Adrenal gland (tissue), 19 donors: ENCODE measurements at regions of chr2 and their contacts with region 1.

Region 1: DNA sequence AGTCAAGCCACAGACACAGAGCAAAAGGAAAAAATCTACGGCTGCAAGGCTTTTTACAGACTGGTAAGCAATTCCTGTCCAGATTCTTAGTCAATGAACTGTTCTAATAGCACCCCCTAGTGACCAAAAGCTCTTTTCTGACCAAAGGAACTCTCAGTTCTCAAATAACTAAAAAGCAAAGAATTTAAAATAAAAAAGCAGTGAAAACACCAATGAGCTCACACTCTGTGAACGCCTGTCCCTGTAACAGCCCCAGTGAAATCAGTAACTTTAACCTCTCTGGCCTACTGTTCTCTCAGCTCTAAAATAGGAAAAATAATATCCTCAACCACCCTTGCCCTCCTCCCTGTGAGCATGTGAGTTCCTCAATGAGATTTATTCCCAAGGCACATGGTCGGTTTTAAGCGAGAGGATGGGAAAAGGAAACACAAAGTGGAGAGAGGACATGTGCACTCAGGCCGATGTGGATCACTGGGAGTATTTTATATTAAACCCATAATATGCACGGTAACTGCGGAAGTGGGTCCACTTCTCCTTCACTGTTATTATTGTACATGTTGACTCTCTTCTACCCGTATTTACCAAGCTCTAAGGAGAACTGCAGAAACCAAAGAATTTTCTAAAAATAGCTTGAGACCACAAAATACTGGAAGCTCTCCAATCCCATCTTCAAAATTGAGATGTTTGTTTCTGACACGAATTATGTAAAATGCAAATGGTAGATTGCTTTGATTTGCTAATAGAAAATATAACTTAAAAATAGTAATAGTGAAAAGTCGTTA is 128.5 kb downstream of the STK39 start:
- DNase-seq: peak in 4 of 7 donors; percentile 11 to 32 (median 18)
- H3K4me3 ChIP-seq: no peak overlapping the region
- H3K27ac ChIP-seq: peak overlapping the region in 1 of 5 donors; percentile 19
- H3K4me1 ChIP-seq: no peaks in the 10 kb centered on the region
- H3K27me3 ChIP-seq: no peaks in the 10 kb centered on the region
- CTCF ChIP-seq: peak; percentile 55 to 73 (median 62)
- POLR2A ChIP-seq: no peak

Region 2: DNA sequence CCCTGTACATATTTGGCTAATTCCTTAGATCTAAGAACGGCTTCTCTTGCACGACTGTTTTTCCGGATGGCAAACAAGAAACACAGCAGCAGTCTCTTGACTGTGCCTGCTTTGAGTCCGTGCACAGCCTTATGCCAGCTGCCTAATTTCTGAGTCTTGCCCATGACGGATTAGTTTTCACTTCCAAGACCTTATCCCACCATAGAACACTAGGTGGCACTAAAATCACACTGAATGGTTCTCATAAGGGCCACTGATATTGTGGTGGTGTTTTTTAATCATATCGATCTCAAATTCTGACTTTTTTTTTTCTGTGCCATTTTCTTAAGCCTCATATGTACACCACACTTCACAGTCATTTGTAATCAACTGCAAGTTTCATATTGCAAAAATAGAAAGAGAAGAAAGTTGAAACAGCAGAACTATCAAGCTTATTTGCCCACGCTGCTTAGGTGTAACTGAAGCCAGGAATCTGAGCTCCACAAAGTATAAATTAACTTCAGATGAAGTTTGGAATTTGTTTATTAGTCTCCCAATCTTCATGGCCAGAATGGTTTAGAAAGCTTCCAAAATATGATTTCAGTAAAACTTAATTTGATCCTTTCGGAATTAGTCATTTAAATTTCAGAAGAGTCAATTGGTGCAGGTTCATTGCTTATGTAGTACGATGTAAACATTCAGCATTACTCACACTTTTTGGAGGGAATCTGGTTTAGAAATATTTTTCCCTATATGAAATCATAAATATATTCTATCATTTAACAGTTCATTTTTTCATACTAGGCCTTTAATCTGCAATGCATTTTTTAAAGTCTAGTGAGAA is 1579.4 kb before region 1 on chr2:
- intact Hi-C with region 1: loop called in 1 of 2 experiments (anchors 10 kb)
- DNase-seq: peak; percentile 12 to 53 (median 32)
- H3K4me3 ChIP-seq: no peak overlapping the region
- H3K27ac ChIP-seq: no peak overlapping the region
- H3K4me1 ChIP-seq: no peaks in the 10 kb centered on the region
- H3K27me3 ChIP-seq: no peaks in the 10 kb centered on the region
- CTCF ChIP-seq: peak; percentile 47 to 83 (median 74)
- POLR2A ChIP-seq: no peak

Region 3: GRCh38 chr2:167745667-167746066 is 373.3 kb before region 1 on chr2:
- intact Hi-C with region 1: no loop called
- DNase-seq: no peak
- H3K4me3 ChIP-seq: no peak overlapping the region
- H3K27ac ChIP-seq: no peak overlapping the region
- H3K4me1 ChIP-seq: no peaks in the 10 kb centered on the region
- H3K27me3 ChIP-seq: no peaks in the 10 kb centered on the region
- CTCF ChIP-seq: no peak
- POLR2A ChIP-seq: no peak

Region 4: GRCh38 chr2:167955264-167955906 is 163.5 kb before region 1 on chr2:
- intact Hi-C with region 1: loop called in 1 of 2 experiments (anchors 5 kb)
- DNase-seq: no peak
- H3K4me3 ChIP-seq: no peak overlapping the region
- H3K27ac ChIP-seq: no peak overlapping the region
- H3K4me1 ChIP-seq: no peaks in the 10 kb centered on the region
- H3K27me3 ChIP-seq: no peaks in the 10 kb centered on the region
- CTCF ChIP-seq: no peak
- POLR2A ChIP-seq: no peak

Region 5: GRCh38 chr2:168455648-168456520 is 337.0 kb after region 1 on chr2 and contains the start of gene CERS6:
- intact Hi-C with region 1: no loop called
- DNase-seq: peak; percentile 97 to 98 (median 97)
- H3K4me3 ChIP-seq: peak within 1 kb of the TSS; percentile 19 to 97 (median 77)
- H3K27ac ChIP-seq: peak within 1 kb of the TSS; percentile 56 to 93 (median 77)
- H3K4me1 ChIP-seq: peaks cover 0 to 14% of the 10 kb centered on the region in 2 donors
- H3K27me3 ChIP-seq: no peaks in the 10 kb centered on the region
- CTCF ChIP-seq: peak in 1 of 6 experiments; percentile 26
- POLR2A ChIP-seq: peak; percentile 77 to 94
- total RNA-seq, gene CERS6: 20.5 to 110 (median 29.9) TPM

Region 6: GRCh38 chr2:168565112-168565511 is 446.2 kb after region 1 on chr2:
- intact Hi-C with region 1: no loop called
- DNase-seq: peak in 1 of 7 donors; percentile 21
- H3K4me3 ChIP-seq: no peak overlapping the region
- H3K27ac ChIP-seq: no peak overlapping the region
- H3K4me1 ChIP-seq: peaks cover 0 to 31% of the 10 kb centered on the region in 2 donors
- H3K27me3 ChIP-seq: no peaks in the 10 kb centered on the region
- CTCF ChIP-seq: no peak
- POLR2A ChIP-seq: no peak